ENCODE measurements at regions of chr18 and their contacts with region 1.

Region 1: GRCh38 chr18:50819728-50820378 is at the start of gene MRO:
- DNase-seq: peak; percentile 63 to 82 (median 76)
- ATAC-seq: peak; percentile 98
- H3K4me3 ChIP-seq: peak within 1 kb of the TSS; percentile 49
- H3K4me3 Mint-ChIP-seq: no peak within 1 kb of the TSS
- H3K27ac ChIP-seq: no peak within 1 kb of the TSS
- H3K27ac Mint-ChIP-seq: peak within 1 kb of the TSS in 1 of 9 donors; percentile 12
- H3K4me1 ChIP-seq: peaks cover 0 to 5% of the 10 kb centered on the region in 2 donors
- H3K4me1 Mint-ChIP-seq: peaks cover 0 to 3% (median 0%) of the 10 kb centered on the region in 7 donors
- H3K27me3 ChIP-seq: no peaks in the 10 kb centered on the region
- H3K27me3 Mint-ChIP-seq: peaks cover 7 to 21% (median 14%) of the 10 kb centered on the region in 5 donors
- total RNA-seq, gene MRO: not detected

Region 2: GRCh38 chr18:50878345-50879301 is 58.8 kb after region 1 on chr18 and contains the start of gene ME2:
- CTCF ChIA-PET with region 1: interaction called, 4 read pairs
- POLR2A ChIA-PET with region 1: interaction called, 6 read pairs
- intact Hi-C with region 1: loop called (anchors 1 to 2 kb)
- DNase-seq: peak; percentile 82 to 95 (median 89)
- ATAC-seq: peak; percentile 94
- H3K4me3 ChIP-seq: peak within 1 kb of the TSS; percentile 61
- H3K4me3 Mint-ChIP-seq: peak within 1 kb of the TSS; percentile 95 to 99 (median 97)
- H3K27ac ChIP-seq: peak within 1 kb of the TSS; percentile 98
- H3K27ac Mint-ChIP-seq: peak within 1 kb of the TSS; percentile 93 to 99 (median 98)
- H3K4me1 ChIP-seq: peaks cover 17% of the 10 kb centered on the region in 2 donors
- H3K4me1 Mint-ChIP-seq: peaks cover 18 to 37% (median 34%) of the 10 kb centered on the region in 7 donors
- H3K27me3 ChIP-seq: no peaks in the 10 kb centered on the region
- H3K27me3 Mint-ChIP-seq: peaks cover 0 to 11% (median 4%) of the 10 kb centered on the region in 5 donors
- total RNA-seq, gene ME2: 29.4 to 84.7 (median 43.2) TPM

Region 3: GRCh38 chr18:50935493-50936191 is 115.8 kb after region 1 on chr18:
- CTCF ChIA-PET with region 1: interaction called, 3 read pairs
- POLR2A ChIA-PET with region 1: no interaction called
- intact Hi-C with region 1: loop called in 1 of 2 experiments (anchors 5 kb)
- DNase-seq: no peak
- ATAC-seq: no peak
- H3K4me3 ChIP-seq: no peak overlapping the region
- H3K4me3 Mint-ChIP-seq: no peak overlapping the region
- H3K27ac ChIP-seq: no peak overlapping the region
- H3K27ac Mint-ChIP-seq: peak overlapping the region in 5 of 9 donors; percentile 31 to 62 (median 59)
- H3K4me1 ChIP-seq: no peaks in the 10 kb centered on the region
- H3K4me1 Mint-ChIP-seq: peaks cover 0 to 7% (median 2%) of the 10 kb centered on the region in 7 donors
- H3K27me3 ChIP-seq: no peaks in the 10 kb centered on the region
- H3K27me3 Mint-ChIP-seq: no peaks in the 10 kb centered on the region

Region 4: GRCh38 chr18:51029694-51030536 is 210.1 kb after region 1 on chr18 and contains the start of gene SMAD4:
- CTCF ChIA-PET with region 1: interaction called, 3 read pairs
- POLR2A ChIA-PET with region 1: interaction called, 3 read pairs
- intact Hi-C with region 1: loop called in 1 of 2 experiments (anchors 1 kb)
- DNase-seq: peak; percentile 95 to 99 (median 97)
- ATAC-seq: peak; percentile 89
- H3K4me3 ChIP-seq: peak within 1 kb of the TSS; percentile 63
- H3K4me3 Mint-ChIP-seq: peak within 1 kb of the TSS; percentile 96 to 100 (median 99)
- H3K27ac ChIP-seq: peak within 1 kb of the TSS; percentile 81
- H3K27ac Mint-ChIP-seq: peak within 1 kb of the TSS; percentile 95 to 100 (median 98)
- H3K4me1 ChIP-seq: peaks cover 13 to 40% of the 10 kb centered on the region in 2 donors
- H3K4me1 Mint-ChIP-seq: peaks cover 35 to 62% (median 57%) of the 10 kb centered on the region in 7 donors
- H3K27me3 ChIP-seq: no peaks in the 10 kb centered on the region
- H3K27me3 Mint-ChIP-seq: no peaks in the 10 kb centered on the region
- total RNA-seq, gene SMAD4: 82.5 to 170 (median 92.5) TPM

Region 5: DNA sequence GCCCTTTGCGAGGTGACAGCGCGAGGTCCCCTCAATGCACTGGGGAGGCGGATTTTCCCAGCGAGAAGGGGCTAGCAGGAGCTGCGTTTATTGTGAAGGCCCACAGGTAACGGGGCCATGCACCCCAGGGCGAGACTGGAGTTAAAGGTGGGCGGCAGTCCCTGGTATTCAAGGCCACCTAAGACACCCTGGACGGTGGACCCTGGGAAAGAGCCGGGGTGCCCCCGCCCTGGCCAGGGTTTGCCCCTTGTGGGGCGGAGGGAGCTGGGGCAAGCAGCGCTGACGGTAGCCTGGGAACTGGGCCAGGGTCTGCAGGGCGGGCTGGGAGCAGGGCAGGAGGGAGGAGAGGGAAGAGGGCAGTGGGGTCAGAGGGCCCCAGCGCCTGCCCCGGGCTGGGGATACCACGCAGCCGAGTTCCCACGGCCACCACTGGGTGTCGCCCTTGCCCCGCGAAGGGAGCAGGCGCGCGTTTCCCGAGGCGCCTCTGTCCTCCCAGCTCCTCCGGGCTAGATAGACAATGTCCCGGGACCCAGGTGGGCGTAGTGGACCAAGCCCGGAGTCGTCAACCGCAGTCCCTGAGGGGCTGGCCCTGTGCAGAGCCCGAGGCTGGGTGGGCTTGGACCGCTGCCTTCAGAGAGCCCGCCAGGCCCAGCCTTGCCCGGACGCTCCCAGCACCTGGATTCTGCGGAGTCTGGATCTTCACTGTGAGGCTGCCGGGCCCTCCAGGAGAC is 290.4 kb after region 1 on chr18:
- CTCF ChIA-PET with region 1: interaction called, 4 read pairs
- POLR2A ChIA-PET with region 1: no interaction called
- intact Hi-C with region 1: loop called in 1 of 2 experiments (anchors 2 kb)
- DNase-seq: peak; percentile 12 to 83 (median 56)
- ATAC-seq: peak; percentile 85
- H3K4me3 ChIP-seq: no peak overlapping the region
- H3K4me3 Mint-ChIP-seq: no peak overlapping the region
- H3K27ac ChIP-seq: no peak overlapping the region
- H3K27ac Mint-ChIP-seq: no peak overlapping the region
- H3K4me1 ChIP-seq: peaks cover 0 to 9% of the 10 kb centered on the region in 2 donors
- H3K4me1 Mint-ChIP-seq: peaks cover 10 to 16% (median 13%) of the 10 kb centered on the region in 7 donors
- H3K27me3 ChIP-seq: no peaks in the 10 kb centered on the region
- H3K27me3 Mint-ChIP-seq: no peaks in the 10 kb centered on the region

Region 6: DNA sequence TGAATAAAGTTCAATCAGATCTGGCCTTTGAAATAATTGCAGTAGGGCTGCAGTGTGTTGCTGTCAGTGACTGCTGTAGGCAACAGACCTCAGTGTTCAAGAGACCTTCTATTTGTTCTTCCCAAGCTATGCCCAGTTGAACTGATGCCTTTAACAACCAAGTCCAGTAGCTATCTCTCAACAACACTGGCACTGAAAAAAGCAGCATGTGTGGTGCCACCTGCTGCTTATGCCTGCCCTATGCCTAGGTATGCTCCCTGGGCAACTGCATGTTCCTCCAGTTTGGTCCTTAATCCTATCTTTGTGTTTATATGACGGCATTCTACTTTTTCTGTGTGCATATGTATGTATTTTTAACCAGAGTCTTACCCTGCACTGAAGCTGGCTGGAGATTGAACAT is 901.5 kb after region 1 on chr18:
- CTCF ChIA-PET with region 1: no interaction called
- POLR2A ChIA-PET with region 1: no interaction called
- intact Hi-C with region 1: loop called in 1 of 2 experiments (anchors 1 kb)
- DNase-seq: no peak
- ATAC-seq: no peak
- H3K4me3 ChIP-seq: no peak overlapping the region
- H3K4me3 Mint-ChIP-seq: no peak overlapping the region
- H3K27ac ChIP-seq: no peak overlapping the region
- H3K27ac Mint-ChIP-seq: no peak overlapping the region
- H3K4me1 ChIP-seq: no peaks in the 10 kb centered on the region
- H3K4me1 Mint-ChIP-seq: no peaks in the 10 kb centered on the region
- H3K27me3 ChIP-seq: no peaks in the 10 kb centered on the region
- H3K27me3 Mint-ChIP-seq: peaks cover 0 to 18% (median 5%) of the 10 kb centered on the region in 5 donors